ENCODE measurements at regions of chr3 and their contacts with region 1.

Region 1: DNA sequence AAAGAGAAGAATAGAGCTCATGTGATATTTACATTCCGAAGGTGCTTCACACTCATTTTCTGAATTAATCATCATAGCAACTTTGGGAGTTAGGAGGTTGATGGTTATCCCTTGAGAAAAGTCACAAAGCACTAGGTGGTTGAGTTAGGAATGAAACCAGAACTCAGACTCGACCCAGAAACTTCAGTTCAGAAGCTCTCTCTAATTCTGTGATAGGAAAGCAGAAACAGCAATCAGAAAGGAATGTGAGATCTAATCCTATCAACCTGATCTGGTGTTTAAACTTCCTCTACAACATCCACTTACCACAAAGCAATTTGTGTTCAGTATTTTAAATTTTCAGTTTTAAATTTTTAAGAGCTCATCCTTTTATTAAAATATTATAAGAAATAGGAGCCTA is 211.2 kb downstream of the CNTN3 start:
- DNase-seq: no peak
- ATAC-seq: no peak
- H3K4me3 ChIP-seq: no peak overlapping the region
- H3K27ac ChIP-seq: no peak overlapping the region
- H3K4me1 ChIP-seq: no peaks in the 10 kb centered on the region
- H3K27me3 ChIP-seq: no peaks in the 10 kb centered on the region
- CTCF ChIP-seq: no peak

Region 2: GRCh38 chr3:74426571-74426970 is 23.3 kb after region 1 on chr3:
- CTCF ChIA-PET with region 1: no interaction called
- POLR2A ChIA-PET with region 1: no interaction called
- in situ Hi-C with region 1: no loop called
- intact Hi-C with region 1: loop called (anchors 2 kb)
- DNase-seq: no peak
- ATAC-seq: no peak
- H3K4me3 ChIP-seq: no peak overlapping the region
- H3K27ac ChIP-seq: no peak overlapping the region
- H3K4me1 ChIP-seq: no peaks in the 10 kb centered on the region
- H3K27me3 ChIP-seq: no peaks in the 10 kb centered on the region
- CTCF ChIP-seq: no peak